AG04449 (cell line): ENCODE measurements at regions of chr1 and their contacts with region 1.

Region 1: DNA sequence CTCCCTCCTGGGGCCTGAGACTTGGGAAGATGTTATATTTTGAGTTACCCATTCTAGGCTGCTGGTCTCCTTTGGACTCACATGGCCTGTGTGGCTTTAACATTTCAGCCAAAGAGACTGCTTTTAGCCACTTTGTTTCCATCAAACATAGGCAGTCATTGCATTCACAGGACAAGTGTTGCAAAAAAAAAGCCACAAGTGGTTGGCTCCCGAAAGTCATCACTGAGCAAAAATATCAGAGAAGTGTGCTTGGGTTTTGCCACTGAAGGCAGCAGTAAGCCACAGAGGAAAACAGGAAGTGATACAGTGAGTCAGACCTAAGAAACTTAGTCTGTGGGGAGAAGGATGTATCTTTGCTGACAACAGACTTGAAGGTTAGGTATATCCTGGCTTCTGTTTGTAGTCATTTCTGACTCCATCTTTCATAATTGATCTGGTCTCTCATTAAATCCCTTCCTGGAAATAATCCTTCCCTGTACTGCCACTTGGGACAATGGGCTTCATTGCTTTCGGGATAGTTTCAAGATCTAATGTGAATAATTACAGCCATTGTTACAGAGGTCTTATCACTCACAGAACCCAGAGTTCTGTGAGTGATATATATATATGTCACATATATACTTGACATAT is 80.9 kb downstream of the COLGALT2 start:
- DNase-seq: peak; percentile 62
- H3K4me3 ChIP-seq: no peak overlapping the region
- CTCF ChIP-seq: peak; percentile 35

Region 2: GRCh38 chr1:183942933-183943693 is 13.6 kb before region 1 on chr1:
- CTCF ChIA-PET with region 1: interaction called, 19 read pairs
- POLR2A ChIA-PET with region 1: no interaction called
- DNase-seq: peak; percentile 97
- H3K4me3 ChIP-seq: peak overlapping the region; percentile 26; the same call in 1 of the 2 replicates
- CTCF ChIP-seq: peak; percentile 43

Region 3: GRCh38 chr1:184041731-184042130 is 85.1 kb after region 1 on chr1:
- CTCF ChIA-PET with region 1: no interaction called
- POLR2A ChIA-PET with region 1: no interaction called
- DNase-seq: no peak
- H3K4me3 ChIP-seq: no peak overlapping the region
- CTCF ChIP-seq: no peak